GM10248 (cell line): ENCODE measurements at regions of chr22 and their contacts with region 1.

Region 1: DNA sequence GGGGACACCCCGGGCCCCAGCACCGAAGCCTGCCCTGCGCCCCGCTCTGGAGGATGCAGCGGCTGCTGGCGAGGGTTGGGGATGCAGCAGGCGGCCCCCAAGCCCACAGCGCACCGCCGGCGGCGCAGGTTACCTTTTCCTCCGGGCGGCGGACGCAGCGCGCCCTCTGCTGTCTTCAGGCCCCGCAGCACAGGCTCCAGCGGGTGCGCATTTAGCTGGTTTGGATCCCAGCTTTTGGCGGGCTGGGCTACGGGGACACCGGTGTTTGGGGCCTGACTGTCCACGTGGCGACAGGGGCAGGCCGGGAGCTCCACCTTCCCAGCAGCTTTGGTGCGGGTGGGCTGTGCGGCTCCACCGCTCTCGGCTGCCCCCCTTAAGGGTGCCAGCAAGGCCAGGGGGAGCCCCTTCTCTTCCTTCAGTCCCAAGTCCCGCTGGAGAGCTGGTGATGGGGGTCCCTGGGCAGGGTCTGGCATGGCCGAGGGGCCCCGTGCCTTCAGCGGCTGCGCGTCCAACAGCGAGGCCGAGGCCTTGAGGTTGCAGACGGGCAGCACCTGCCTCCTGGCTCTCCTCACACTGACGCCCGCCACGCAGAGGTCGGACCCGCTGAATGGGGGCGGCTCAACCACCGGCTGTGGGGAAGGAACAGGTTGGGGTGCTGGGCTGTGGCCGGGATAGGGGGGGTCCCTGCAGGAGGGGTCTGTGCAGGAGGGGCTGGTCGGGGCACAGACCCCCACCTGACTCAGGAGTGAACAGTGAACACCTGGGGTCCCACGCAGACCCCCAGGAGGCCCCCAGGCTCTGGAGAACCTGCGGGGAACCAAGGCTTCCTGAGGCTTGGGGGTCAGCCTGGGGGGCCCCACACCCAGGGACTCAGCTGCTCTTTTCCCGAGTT is 18.0 kb upstream of the IL17REL start:
- DNase-seq: peak; percentile 93
- CTCF ChIP-seq: peak; percentile 96

Region 2: DNA sequence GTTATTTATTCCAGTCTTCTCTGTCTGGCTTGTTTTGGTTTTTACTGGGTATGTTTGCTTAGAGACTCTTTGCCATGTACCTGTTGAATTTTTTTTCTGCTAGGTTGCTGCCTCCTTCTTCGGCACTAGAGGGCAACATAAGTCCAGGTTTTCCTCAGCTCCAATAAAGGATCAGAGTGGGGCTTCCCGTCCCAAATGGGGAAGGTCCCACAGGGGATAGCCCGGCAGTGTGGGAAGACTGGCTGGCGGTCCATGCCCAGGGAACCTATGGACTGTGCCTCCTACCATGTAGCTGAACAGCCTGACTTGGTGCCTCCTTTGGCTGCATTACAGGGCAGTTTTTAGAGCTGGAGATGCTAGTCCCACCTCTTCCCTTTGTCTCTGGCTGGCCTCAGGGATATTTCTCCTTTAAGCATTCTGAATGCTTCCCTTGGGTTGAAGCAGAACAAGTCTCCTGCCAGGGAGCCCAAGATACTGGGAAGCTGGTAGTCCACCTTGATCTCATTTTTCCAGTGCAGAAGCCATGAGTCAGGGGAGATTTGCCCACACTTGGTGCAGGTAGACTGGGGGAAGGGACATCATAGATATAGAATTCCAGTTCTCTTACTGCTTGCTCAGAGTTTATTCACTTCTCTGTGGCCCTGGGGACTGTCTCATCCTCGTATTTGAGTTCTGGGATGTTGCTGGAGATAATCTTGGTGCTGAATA is 263.0 kb before region 1 on chr22:
- CTCF ChIA-PET with region 1: interaction called, 20 read pairs
- POLR2A ChIA-PET with region 1: no interaction called
- DNase-seq: peak; percentile 65
- CTCF ChIP-seq: peak; percentile 69

Region 3: GRCh38 chr22:49925525-49926128 is 104.9 kb before region 1 on chr22:
- CTCF ChIA-PET with region 1: interaction called, 90 read pairs
- POLR2A ChIA-PET with region 1: no interaction called
- DNase-seq: peak; percentile 70
- CTCF ChIP-seq: no peak

Region 4: DNA sequence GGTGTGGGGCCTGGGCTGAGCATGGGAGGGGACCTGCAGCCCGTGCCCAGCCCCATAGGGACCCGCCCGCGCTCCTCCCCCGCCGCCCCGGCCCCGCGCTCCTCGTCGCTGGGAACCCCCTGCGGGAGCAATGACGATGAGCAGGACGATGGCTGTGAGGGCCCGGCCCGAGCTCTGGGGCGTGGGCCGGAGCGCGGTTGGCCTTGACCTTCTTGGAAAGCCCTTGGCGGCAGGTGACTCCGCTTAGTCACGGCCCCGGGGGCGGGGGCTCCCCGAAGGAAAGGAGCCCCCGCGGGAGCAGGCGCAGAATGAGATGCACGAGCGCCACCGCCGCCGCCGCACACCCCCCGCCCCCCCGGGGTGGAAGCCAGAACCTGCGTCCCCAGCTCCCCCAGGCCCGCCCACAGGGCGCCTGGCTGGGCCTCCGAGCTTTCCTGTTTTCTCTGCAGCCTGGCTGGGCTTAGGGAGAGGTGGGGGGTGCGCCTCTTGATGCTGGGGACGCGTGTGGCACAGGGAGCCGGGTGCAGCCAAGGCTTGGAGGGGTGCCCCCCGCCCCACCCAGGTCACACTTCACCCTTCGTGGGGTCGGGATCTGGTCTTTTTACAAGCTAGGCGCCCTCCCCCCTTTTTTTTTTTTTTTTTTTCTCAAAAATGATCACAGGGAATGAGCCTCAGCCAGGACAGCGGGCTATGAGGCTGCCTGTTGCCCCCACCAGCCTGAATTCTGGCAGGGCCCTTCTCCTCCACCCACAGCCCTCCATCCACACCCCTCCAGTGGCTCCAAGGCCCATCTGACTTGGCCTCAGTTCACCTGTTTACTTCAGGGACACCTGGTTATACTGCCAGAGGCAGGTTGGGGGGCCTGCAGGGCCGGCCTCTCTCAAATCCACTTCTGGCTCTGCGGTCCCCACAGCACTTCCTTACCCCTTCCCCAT is 94.3 kb before region 1 on chr22:
- CTCF ChIA-PET with region 1: interaction called, 90 read pairs
- POLR2A ChIA-PET with region 1: no interaction called
- DNase-seq: peak; percentile 90
- CTCF ChIP-seq: no peak

Region 5: GRCh38 chr22:49992921-49993648 is 37.5 kb before region 1 on chr22:
- CTCF ChIA-PET with region 1: interaction called, 18 read pairs
- POLR2A ChIA-PET with region 1: no interaction called
- DNase-seq: peak; percentile 88
- CTCF ChIP-seq: peak; percentile 93

Region 6: GRCh38 chr22:50016988-50017700 is 13.4 kb before region 1 on chr22:
- CTCF ChIA-PET with region 1: interaction called, 26 read pairs
- POLR2A ChIA-PET with region 1: no interaction called
- DNase-seq: peak; percentile 88
- CTCF ChIP-seq: no peak